Dendritic cell treated with granulocyte-macrophage colony-stimulating factor and Interleukin-4, amounts not matched to agents 40 ng/mL and 50 ng/mL, for 4 days (primary cell): ENCODE measurements at regions of chr5 and their contacts with region 1.

Region 1: GRCh38 chr5:54310433-54311175 is at the start of gene ARL15:
- H3K4me3 Mint-ChIP-seq: peak within 1 kb of the TSS; percentile 87
- H3K27ac Mint-ChIP-seq: peak within 1 kb of the TSS; percentile 89
- H3K4me1 Mint-ChIP-seq: peaks cover 29% of the 10 kb centered on the region
- H3K27me3 Mint-ChIP-seq: peaks cover 8% of the 10 kb centered on the region

Region 2: DNA sequence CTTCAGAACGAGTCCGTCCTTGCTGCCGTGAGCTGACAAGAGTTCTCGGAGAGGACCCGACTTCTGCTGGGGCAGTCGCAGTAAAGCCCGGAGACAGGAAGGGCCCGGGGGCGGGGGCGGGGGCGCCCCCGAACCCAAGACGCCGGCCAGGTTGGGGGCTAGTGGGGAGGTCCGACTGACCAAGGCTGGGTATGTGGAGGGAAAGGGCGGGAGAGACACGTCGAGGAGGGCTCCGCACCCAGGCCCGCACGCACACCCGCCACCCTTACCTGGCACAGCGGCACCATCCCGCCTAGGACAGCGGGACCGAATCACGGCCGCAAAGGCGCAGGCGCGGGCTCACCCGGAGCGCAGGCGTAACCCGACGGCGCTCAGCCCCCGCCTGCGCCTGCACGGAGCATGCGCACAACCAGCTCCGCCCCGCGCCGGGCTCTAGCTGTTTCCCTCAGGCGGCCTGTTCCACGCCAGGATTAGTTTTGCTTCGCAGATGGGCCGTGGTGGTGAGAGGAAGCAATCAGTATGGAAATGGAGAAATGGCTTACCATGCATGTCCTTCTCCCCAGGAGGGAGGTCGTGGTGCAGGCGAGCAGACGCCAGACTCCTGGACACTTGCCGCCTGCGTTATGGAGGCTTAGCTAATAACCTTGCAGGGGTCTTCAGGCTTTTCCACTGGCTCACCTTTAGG is 1201.0 kb before region 1 on chr5 and contains the start of gene MOCS2:
- intact Hi-C with region 1: loop called (anchors 5 kb)
- H3K4me3 Mint-ChIP-seq: peak within 1 kb of the TSS; percentile 79
- H3K27ac Mint-ChIP-seq: peak within 1 kb of the TSS; percentile 81
- H3K4me1 Mint-ChIP-seq: peaks cover 10% of the 10 kb centered on the region
- H3K27me3 Mint-ChIP-seq: no peaks in the 10 kb centered on the region

Region 3: DNA sequence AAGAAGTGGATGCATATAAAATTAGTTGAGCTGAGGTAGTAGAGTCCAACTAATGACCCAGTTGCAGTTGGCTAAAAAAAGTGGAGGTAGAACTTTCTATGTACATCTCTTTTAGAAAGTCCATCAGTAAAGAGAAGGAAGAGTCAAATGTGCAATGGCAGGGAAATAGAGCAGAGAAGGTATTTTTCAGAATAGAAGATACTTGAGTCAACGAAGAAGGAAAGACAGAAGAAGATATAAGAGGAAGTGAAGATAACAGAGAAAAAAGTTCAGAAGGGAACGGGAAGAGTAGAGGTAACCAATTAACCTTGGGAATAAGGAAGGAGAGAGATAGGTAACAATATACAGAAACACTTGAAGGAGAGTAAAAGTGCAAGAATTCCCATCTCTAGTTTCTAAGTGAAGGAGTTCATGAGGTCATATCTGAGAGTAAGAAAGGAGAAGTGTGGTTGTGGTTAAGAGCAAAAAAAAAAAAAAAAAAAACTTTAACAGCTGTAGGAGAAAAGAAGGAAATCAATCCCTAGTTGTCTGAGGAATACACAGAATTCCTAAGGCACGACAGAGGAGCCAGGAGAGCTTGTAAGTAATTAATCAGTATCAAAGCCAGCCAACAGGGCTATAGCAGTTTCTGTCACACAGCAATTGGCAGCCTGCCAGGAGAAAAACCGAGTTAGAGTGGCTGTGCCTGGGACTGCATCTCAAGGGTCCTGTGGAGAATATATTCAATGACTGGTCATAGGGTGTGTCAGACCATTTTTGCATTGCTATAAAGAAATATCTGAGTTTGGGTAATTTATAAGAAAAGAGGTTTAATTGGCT is 61.2 kb before region 1 on chr5:
- intact Hi-C with region 1: loop called (anchors 2 kb)
- H3K4me3 Mint-ChIP-seq: no peak overlapping the region
- H3K27ac Mint-ChIP-seq: no peak overlapping the region
- H3K4me1 Mint-ChIP-seq: no peaks in the 10 kb centered on the region
- H3K27me3 Mint-ChIP-seq: no peaks in the 10 kb centered on the region

Region 4: GRCh38 chr5:54415896-54416601 is 105.4 kb after region 1 on chr5:
- intact Hi-C with region 1: loop called (anchors 10 kb)
- H3K4me3 Mint-ChIP-seq: no peak overlapping the region
- H3K27ac Mint-ChIP-seq: no peak overlapping the region
- H3K4me1 Mint-ChIP-seq: no peaks in the 10 kb centered on the region
- H3K27me3 Mint-ChIP-seq: peaks cover 3% of the 10 kb centered on the region

Region 5: GRCh38 chr5:54480296-54480695 is 169.7 kb after region 1 on chr5:
- intact Hi-C with region 1: loop called (anchors 10 kb)
- H3K4me3 Mint-ChIP-seq: peak overlapping the region; percentile 50
- H3K27ac Mint-ChIP-seq: peak overlapping the region; percentile 89
- H3K4me1 Mint-ChIP-seq: peaks cover 32% of the 10 kb centered on the region
- H3K27me3 Mint-ChIP-seq: peaks cover 5% of the 10 kb centered on the region